Activated CD4-positive, alpha-beta memory T cell treated with anti-CD3 and anti-CD28 coated beads for 36 hours (primary cell): ENCODE measurements at regions of chr1 and their contacts with region 1.

Region 1: GRCh38 chr1:32200226-32201010 is at the start of gene CCDC28B:
- DNase-seq: peak; percentile 67
- H3K4me3 Mint-ChIP-seq: peak within 1 kb of the TSS; percentile 81
- H3K27ac Mint-ChIP-seq: peak within 1 kb of the TSS; percentile 80
- H3K4me1 Mint-ChIP-seq: peaks cover 51% of the 10 kb centered on the region
- H3K27me3 Mint-ChIP-seq: no peaks in the 10 kb centered on the region
- total RNA-seq, gene CCDC28B: 13.4 to 14.8 TPM

Region 2: GRCh38 chr1:31977385-31978131 is 222.9 kb before region 1 on chr1:
- CTCF ChIA-PET with region 1: no interaction called
- POLR2A ChIA-PET with region 1: no interaction called
- intact Hi-C with region 1: no loop called
- DNase-seq: no peak
- H3K4me3 Mint-ChIP-seq: no peak overlapping the region
- H3K27ac Mint-ChIP-seq: no peak overlapping the region
- H3K4me1 Mint-ChIP-seq: peaks cover 22% of the 10 kb centered on the region
- H3K27me3 Mint-ChIP-seq: no peaks in the 10 kb centered on the region

Region 3: DNA sequence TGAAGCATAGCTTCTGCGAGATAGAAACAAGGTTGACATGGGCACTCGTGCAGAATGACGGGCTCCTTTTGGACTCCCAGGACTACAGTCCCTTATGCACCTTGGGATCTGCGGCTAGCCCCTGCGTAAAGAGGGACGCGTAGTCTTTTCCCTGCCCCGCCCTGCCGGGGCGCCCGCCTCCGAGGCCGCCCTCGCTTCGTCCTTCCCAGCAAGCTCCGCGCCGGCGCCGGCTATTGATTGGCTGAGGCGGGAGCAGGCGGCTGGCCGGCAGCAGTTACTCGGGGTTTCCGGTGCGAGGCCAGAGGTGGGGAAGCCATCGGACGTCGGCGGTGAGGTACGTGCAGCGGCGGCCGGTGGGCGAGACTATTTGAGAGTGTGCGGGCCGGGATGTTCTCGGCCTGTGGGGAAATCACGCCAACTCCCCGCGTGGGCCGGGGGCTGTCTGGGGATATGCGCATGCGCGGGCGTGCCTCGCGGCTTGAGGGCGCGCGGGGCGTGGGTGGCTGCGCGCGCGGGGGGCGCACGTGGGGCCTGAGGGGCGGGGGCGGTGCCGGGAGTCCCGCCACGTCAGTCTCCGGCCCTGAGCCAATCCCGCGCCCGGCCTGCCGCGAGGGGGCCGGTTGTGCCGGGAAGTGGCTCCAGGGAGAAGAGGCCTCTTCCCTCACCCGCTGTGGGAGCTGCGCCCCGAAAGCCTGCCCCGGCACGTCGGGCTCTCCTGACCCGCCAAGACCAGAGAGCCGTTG is 20.8 kb before region 1 on chr1 and contains the start of gene TXLNA:
- CTCF ChIA-PET with region 1: no interaction called
- POLR2A ChIA-PET with region 1: interaction called, 17 read pairs
- intact Hi-C with region 1: loop called (anchors 2 kb)
- DNase-seq: peak; percentile 95
- H3K4me3 Mint-ChIP-seq: peak within 1 kb of the TSS; percentile 91
- H3K27ac Mint-ChIP-seq: peak within 1 kb of the TSS; percentile 96
- H3K4me1 Mint-ChIP-seq: peaks cover 38% of the 10 kb centered on the region
- H3K27me3 Mint-ChIP-seq: no peaks in the 10 kb centered on the region
- total RNA-seq, gene TXLNA: 77.4 to 78.2 TPM